ENCODE measurements at regions of chr11 and their contacts with region 1.

Region 1: DNA sequence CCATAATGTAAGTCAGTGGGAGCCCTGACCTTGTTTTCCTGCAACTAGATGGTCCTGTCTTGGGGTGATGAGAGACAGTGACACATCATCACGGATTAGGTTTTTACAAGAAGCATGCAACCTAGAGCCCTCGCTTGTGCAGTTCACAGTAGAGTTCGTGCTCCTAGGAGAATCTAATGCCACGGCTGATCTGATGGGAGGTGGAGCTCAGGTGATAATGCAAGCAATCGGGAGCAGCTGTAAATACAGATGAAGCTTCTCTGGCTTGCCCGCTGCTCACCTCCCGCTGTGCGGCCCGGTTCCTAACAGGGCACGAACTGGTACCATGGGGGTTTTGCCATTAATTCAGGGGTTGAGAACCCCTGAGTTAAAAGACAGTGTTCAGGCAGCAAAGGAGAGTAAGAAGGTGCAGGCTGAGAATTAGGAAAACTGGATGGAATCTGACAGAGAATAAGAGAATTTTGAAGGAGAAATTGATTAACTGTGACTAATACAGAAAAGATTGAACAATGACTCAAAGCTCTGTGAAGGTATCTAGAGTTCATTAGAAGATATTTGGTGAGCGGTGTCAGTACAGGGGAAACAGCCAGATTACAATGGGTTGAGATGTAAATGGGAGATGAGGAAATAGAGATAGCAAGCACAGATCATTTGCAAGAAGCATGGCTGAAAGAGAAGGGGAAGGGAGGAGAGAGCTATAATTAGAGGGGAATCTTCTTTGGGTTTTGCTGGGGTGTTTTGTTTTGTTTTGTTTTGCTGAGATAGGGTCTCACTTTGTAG is 21.0 kb downstream of the WEE1 start:
- DNase-seq: peak; percentile 46
- H3K4me3 ChIP-seq: peak overlapping the region; percentile 61
- H3K27ac ChIP-seq: peak overlapping the region; percentile 95
- H3K4me1 ChIP-seq: peaks cover 71% of the 10 kb centered on the region
- CTCF ChIP-seq: no peak

Region 2: DNA sequence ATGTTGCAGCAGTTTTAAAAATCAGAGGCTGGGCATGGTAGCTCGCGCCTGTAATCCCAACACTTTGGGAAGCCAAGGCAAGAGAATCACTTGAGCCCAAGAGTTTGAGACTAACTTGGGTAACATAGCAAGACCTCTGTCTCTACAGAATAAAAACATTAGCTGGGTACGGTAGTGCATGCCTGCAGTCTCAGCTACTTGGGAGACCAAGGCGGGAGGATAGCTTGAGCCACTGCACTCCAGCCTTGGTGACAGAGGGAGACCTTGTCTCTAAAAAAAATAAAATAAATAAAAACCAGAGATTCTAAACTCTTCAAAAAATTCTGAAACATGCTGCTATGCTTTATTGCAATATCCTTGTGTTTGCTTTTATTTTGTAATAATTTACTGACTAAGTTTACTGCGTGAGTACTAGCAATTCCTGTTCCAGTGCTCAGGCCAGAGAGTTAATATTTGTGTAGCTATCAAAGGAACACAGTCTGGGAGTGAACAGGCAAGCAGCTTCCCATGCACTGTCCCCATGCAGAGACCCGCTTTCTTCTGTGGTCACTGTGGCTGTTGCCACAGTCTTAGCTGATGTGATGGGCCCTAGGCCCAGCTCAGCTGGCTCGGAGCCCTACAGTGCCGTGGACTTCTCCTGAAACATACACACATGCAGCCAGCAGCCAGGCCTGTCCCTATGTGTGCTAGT is 491.1 kb before region 1 on chr11:
- CTCF ChIA-PET with region 1: no interaction called
- POLR2A ChIA-PET with region 1: no interaction called
- intact Hi-C with region 1: no loop called
- DNase-seq: no peak
- H3K4me3 ChIP-seq: no peak overlapping the region
- H3K27ac ChIP-seq: no peak overlapping the region
- H3K4me1 ChIP-seq: no peaks in the 10 kb centered on the region
- CTCF ChIP-seq: no peak

Region 3: GRCh38 chr11:9580894-9581293 is 13.6 kb before region 1 on chr11:
- CTCF ChIA-PET with region 1: interaction called, 3 read pairs
- POLR2A ChIA-PET with region 1: interaction called, 509 read pairs
- intact Hi-C with region 1: loop called (anchors 1 kb)
- DNase-seq: no peak
- H3K4me3 ChIP-seq: no peak overlapping the region
- H3K27ac ChIP-seq: no peak overlapping the region
- H3K4me1 ChIP-seq: peaks cover 49% of the 10 kb centered on the region
- CTCF ChIP-seq: no peak

Region 4: GRCh38 chr11:9681583-9682372 is 87.3 kb after region 1 on chr11:
- CTCF ChIA-PET with region 1: no interaction called
- POLR2A ChIA-PET with region 1: interaction called, 3 read pairs
- intact Hi-C with region 1: loop called (anchors 5 kb)
- DNase-seq: peak; percentile 59
- H3K4me3 ChIP-seq: peak overlapping the region; percentile 30
- H3K27ac ChIP-seq: peak overlapping the region; percentile 81
- H3K4me1 ChIP-seq: peaks cover 96% of the 10 kb centered on the region
- CTCF ChIP-seq: no peak